A549 (cell line): ENCODE measurements at regions of chr17 and their contacts with region 1.

Region 1: DNA sequence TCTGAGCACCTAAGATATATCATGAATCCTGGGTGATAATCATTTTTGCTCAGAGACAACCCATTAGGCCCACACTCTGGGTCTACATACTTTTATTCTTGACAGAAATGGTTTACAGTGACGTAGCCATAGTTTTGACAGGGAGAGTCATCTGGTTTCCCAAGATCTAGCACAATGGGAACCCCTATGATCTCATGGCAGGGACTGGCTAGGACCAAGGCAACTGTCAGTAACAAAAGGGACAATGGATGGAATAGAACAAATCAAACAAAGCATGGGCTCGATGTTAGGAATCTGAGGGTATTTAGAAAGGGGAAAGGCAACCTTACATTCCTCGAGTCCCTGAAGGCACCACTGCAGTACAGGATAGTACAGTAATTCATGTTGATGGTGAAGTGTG is 20.5 kb downstream of the CFAP97D1 start:
- DNase-seq: no peak
- ATAC-seq: no peak
- H3K4me3 ChIP-seq: no peak overlapping the region
- H3K27ac ChIP-seq: no peak overlapping the region
- H3K4me1 ChIP-seq: no peaks in the 10 kb centered on the region
- CTCF ChIP-seq: no peak
- EP300 ChIP-seq: no peak
- POLR2A ChIP-seq: no peak
- RAD21 ChIP-seq: no peak

Region 2: GRCh38 chr17:43790311-43790940 is 10.3 kb before region 1 on chr17:
- CTCF ChIA-PET with region 1: interaction called, 14 read pairs
- POLR2A ChIA-PET with region 1: no interaction called
- DNase-seq: no peak
- ATAC-seq: peak in 1 of 2 experiments; percentile 67; a peak in 3 of 6 replicates
- H3K4me3 ChIP-seq: no peak overlapping the region
- H3K27ac ChIP-seq: no peak overlapping the region
- H3K4me1 ChIP-seq: no peaks in the 10 kb centered on the region
- CTCF ChIP-seq: no peak
- EP300 ChIP-seq: no peak
- POLR2A ChIP-seq: no peak
- RAD21 ChIP-seq: peak in 1 of 2 experiments; percentile 37; a peak in 1 of 5 replicates